H1 (cell line): ENCODE measurements at regions of chr5 and their contacts with region 1.

Region 1: GRCh38 chr5:446864-447263 is 3.9 kb downstream of the EXOC3 start:
- DNase-seq: no peak
- H3K4me3 ChIP-seq: no peak overlapping the region
- H3K27ac ChIP-seq: no peak overlapping the region
- H3K4me1 ChIP-seq: peaks cover 0 to 12% (median 8%) of the 10 kb centered on the region in 4 experiments; a peak in 5 of 7 replicates
- H3K27me3 ChIP-seq: peaks cover 0 to 4% (median 0%) of the 10 kb centered on the region in 4 experiments; a peak in 2 of 7 replicates
- CTCF ChIP-seq: peak in 2 of 3 experiments; percentile 36 to 59; a peak in 2 of 4 replicates
- EP300 ChIP-seq: no peak
- POLR2A ChIP-seq: no peak
- RAD21 ChIP-seq: peak; percentile 32 to 52; a peak in 3 of 4 replicates

Region 2: GRCh38 chr5:317086-317811 is 129.6 kb before region 1 on chr5:
- CTCF ChIA-PET with region 1: interaction called, 17 read pairs
- POLR2A ChIA-PET with region 1: no interaction called
- DNase-seq: peak; percentile 50 to 86
- H3K4me3 ChIP-seq: no peak overlapping the region
- H3K27ac ChIP-seq: no peak overlapping the region
- H3K4me1 ChIP-seq: peaks cover 0 to 19% (median under 1%) of the 10 kb centered on the region in 4 experiments; a peak in 5 of 7 replicates
- H3K27me3 ChIP-seq: peaks cover 28 to 38% (median 35%) of the 10 kb centered on the region in 4 experiments
- CTCF ChIP-seq: peak in 2 of 3 experiments; percentile 92; a peak in 3 of 4 replicates
- EP300 ChIP-seq: no peak; a peak in 1 of 3 replicates
- POLR2A ChIP-seq: no peak
- RAD21 ChIP-seq: peak; percentile 95 to 97

Region 3: GRCh38 chr5:418681-419121 is 28.2 kb before region 1 on chr5:
- CTCF ChIA-PET with region 1: interaction called, 10 read pairs
- POLR2A ChIA-PET with region 1: interaction called, 3 read pairs
- DNase-seq: no peak
- H3K4me3 ChIP-seq: no peak overlapping the region
- H3K27ac ChIP-seq: no peak overlapping the region
- H3K4me1 ChIP-seq: peaks cover 0 to 10% (median 7%) of the 10 kb centered on the region in 4 experiments; a peak in 3 of 7 replicates
- H3K27me3 ChIP-seq: peaks cover 0 to 2% (median 0%) of the 10 kb centered on the region in 4 experiments; a peak in 1 of 7 replicates
- CTCF ChIP-seq: no peak
- EP300 ChIP-seq: no peak
- POLR2A ChIP-seq: no peak
- RAD21 ChIP-seq: no peak

Region 4: DNA sequence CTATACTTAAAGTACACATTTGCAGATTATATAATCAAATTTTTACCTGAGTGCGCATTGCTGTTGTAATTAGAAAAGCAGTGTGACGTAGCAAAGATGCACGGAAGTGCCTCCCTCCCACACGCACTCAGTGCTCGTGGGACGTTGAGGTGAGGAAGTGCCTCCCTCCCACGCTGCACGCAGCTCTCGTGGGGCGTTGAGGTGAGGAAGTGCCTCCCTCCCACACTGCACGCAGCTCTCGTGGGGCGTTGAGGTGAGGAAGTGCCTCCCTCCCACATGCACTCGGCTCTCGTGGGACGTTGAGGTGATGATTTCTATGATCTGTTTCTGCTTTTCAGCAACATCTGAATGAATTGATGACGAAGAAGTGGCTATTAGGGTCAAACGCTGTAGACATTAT is 17.1 kb after region 1 on chr5:
- CTCF ChIA-PET with region 1: interaction called, 14 read pairs
- POLR2A ChIA-PET with region 1: no interaction called
- DNase-seq: no peak
- H3K4me3 ChIP-seq: no peak overlapping the region
- H3K27ac ChIP-seq: no peak overlapping the region
- H3K4me1 ChIP-seq: no peaks in the 10 kb centered on the region
- H3K27me3 ChIP-seq: no peaks in the 10 kb centered on the region
- CTCF ChIP-seq: no peak
- EP300 ChIP-seq: no peak
- POLR2A ChIP-seq: no peak
- RAD21 ChIP-seq: no peak

Region 5: DNA sequence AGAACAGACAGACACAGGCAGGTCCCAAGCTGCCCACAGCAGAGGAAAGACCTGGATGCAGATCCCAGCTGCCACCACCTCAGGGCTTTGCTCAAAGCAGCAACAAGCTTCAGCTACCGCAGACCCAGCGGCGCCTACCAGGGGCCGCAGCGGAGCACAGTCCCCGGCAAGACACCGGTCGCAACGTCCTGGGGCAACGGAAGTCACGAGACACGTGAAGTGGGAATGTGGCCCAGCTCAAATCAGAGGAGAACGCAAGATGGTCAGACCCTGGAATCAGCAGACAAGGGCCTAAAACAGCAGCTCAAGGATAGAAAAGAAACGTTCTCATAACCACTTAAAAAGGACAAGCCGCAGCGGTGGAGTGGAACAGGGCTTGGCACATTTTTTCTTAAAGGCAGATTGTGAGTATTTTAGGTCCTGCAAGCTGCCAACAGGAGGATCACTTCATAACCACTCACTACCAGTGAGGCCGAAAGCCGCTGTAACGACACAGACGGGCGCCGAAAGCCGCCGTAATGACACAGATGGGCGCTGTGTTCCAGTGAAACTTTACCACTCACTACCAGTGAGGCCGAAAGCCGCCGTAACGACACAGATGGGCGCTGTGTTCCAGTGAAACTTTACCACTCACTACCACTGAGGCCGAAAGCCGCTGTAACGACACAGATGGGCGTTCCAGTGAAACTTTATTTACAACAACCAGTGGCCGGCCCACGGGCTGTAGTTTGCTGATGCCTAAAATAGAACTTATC is 55.6 kb after region 1 on chr5:
- CTCF ChIA-PET with region 1: interaction called, 12 read pairs
- POLR2A ChIA-PET with region 1: no interaction called
- DNase-seq: no peak
- H3K4me3 ChIP-seq: no peak overlapping the region
- H3K27ac ChIP-seq: no peak overlapping the region
- H3K4me1 ChIP-seq: peaks cover 0 to 13% (median 5%) of the 10 kb centered on the region in 4 experiments; a peak in 6 of 7 replicates
- H3K27me3 ChIP-seq: peaks cover 0 to 13% (median 3%) of the 10 kb centered on the region in 4 experiments; a peak in 1 of 7 replicates
- CTCF ChIP-seq: peak in 1 of 3 experiments; percentile 10; a peak in 1 of 4 replicates
- EP300 ChIP-seq: no peak
- POLR2A ChIP-seq: no peak
- RAD21 ChIP-seq: peak in 1 of 2 experiments; percentile 26; a peak in 1 of 4 replicates